ENCODE measurements at regions of chr18 and their contacts with region 1.

Region 1: DNA sequence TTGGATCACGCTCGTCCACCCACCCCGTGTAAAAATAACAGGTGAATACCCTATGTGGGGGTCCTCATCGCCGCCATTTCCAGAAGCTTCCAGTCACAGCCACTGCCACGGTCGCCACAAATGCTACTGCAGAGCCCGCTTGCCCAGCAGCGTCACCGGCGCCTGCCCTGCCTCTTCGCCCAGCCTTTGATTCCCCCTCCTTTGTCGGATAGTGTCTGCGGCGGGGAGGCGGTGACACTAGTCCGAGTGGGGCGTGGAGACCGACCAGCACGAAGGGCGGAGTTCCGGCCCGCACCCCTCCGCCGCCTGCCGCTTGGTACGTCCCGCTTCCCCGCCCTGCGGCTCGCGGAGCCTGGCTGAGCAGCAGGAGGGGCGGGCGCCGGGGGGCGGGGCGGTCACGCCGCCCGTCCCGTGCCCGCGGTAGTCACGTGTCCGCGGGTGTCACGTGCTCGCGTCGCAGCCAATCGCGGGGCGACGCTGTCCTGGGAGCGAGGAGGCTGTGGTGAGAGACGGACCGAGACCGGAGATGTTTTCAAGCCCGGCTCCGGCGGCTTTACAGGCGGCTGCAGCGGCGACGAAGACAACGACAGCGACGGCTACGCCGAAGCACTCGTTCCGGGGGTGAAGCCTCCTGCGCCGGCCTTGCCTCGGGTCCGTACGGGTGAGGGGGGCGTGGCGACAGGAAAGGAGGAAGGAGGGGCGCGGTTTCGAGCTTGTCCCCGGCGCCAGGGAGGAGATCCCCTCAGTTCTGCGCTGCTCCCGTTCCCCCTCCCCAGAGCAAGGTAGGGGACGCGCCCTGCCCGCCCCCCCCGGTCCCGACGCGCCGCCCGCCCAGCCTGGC is at the start of gene ANKRD12:
- DNase-seq: peak; percentile 98
- ATAC-seq: peak; percentile 78
- H3K4me3 Mint-ChIP-seq: peak within 1 kb of the TSS; percentile 95
- H3K27ac Mint-ChIP-seq: peak within 1 kb of the TSS; percentile 98
- H3K4me1 Mint-ChIP-seq: peaks cover 53% of the 10 kb centered on the region
- H3K27me3 Mint-ChIP-seq: no peaks in the 10 kb centered on the region
- total RNA-seq, gene ANKRD12: 67.5 to 76.9 TPM

Region 2: GRCh38 chr18:9038277-9038871 is 98.2 kb before region 1 on chr18:
- CTCF ChIA-PET with region 1: no interaction called
- DNase-seq: no peak
- ATAC-seq: no peak
- H3K4me3 Mint-ChIP-seq: no peak overlapping the region
- H3K27ac Mint-ChIP-seq: no peak overlapping the region
- H3K4me1 Mint-ChIP-seq: peaks cover 5% of the 10 kb centered on the region
- H3K27me3 Mint-ChIP-seq: no peaks in the 10 kb centered on the region

Region 3: DNA sequence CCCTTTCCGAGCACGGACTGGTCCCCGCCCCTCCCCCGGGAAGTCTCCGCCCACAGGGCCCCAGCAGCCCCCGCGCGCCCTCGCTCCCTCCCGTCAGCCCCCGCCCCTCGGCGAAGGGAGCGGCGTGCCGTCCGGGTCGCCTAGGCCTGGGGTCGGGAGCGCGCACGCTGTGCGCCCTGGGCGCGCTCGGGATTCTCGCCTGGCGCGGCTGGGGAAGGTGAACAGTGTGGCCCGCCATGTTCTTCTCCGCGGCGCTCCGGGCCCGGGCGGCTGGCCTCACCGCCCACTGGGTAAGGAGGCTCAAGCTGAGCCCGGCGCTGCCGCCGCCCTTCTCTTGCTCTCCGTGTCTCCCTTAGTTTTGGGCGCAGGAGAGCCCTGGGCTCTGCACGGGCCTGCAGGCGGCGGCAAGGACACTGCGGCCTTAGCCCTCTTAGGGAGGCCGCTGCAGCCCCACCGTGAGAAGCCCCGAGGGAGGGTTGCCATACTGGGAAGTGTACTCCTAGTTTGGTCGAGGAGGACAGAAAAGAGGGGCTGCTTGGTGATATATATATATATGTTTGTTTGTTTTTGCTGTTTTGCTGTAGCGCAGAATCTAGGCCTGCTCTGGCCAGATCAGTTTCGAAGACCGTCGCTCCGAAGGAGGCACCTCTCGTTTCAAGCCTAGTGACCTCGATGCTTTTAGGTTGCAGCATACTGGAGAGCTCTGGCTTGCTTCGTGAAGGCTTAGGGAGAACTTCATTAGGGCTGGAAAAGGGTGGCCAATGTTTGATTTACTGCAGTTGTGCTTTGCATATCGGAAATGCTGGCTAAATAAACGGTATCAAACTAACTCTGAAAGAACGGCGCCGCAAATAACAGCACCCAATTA is 33.8 kb before region 1 on chr18 and contains the start of gene NDUFV2:
- CTCF ChIA-PET with region 1: interaction called, 15 read pairs
- DNase-seq: peak; percentile 99
- ATAC-seq: peak; percentile 92
- H3K4me3 Mint-ChIP-seq: peak within 1 kb of the TSS; percentile 88
- H3K27ac Mint-ChIP-seq: peak within 1 kb of the TSS; percentile 97
- H3K4me1 Mint-ChIP-seq: peaks cover 48% of the 10 kb centered on the region
- H3K27me3 Mint-ChIP-seq: no peaks in the 10 kb centered on the region
- total RNA-seq, gene NDUFV2: 222 to 302 TPM

Measured in activated CD8-positive, alpha-beta memory T cell treated with anti-CD3 and anti-CD28 coated beads, Interleukin-2, amount 10 ng/mL, durations not matched to agents 7 days and 5 days (primary cell).